ENCODE measurements at regions of chr20 and their contacts with region 1.

Region 1: GRCh38 chr20:34834459-34834893 is 9.0 kb upstream of the NCOA6 start:
- DNase-seq: no peak
- H3K4me3 Mint-ChIP-seq: no peak overlapping the region
- H3K27ac Mint-ChIP-seq: no peak overlapping the region
- H3K4me1 Mint-ChIP-seq: no peaks in the 10 kb centered on the region
- H3K27me3 Mint-ChIP-seq: peaks cover 7% of the 10 kb centered on the region

Region 2: DNA sequence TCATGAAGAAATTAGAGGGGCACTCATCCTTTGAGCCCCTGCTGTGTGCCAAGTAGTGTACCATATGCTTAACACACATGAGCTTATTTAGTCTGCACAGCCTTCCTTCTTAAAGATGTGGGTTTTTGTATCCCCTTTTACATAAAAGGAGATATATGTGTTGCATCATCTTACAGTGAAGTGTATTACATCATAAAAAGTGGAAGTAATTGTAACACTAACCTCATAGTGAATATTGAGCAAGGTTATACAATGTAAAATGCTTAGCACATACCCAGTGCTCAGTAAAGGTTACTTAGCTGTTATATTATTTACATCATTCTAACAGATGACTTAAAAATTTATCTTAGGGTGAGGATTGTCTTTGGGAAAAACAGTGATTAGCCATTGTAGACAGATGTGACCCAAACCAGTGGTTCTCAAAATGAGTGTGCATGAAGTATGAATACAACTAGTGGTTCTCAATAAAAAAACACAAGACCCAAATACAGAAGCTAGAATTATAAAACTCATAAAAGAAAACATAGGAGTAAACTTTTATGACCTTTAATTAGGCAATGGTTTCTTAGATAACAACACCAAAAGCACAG is 153.8 kb before region 1 on chr20:
- CTCF ChIA-PET with region 1: no interaction called
- intact Hi-C with region 1: no loop called
- DNase-seq: no peak
- H3K4me3 Mint-ChIP-seq: peak overlapping the region; percentile 4
- H3K27ac Mint-ChIP-seq: peak overlapping the region; percentile 46
- H3K4me1 Mint-ChIP-seq: peaks cover 19% of the 10 kb centered on the region
- H3K27me3 Mint-ChIP-seq: no peaks in the 10 kb centered on the region

Region 3: DNA sequence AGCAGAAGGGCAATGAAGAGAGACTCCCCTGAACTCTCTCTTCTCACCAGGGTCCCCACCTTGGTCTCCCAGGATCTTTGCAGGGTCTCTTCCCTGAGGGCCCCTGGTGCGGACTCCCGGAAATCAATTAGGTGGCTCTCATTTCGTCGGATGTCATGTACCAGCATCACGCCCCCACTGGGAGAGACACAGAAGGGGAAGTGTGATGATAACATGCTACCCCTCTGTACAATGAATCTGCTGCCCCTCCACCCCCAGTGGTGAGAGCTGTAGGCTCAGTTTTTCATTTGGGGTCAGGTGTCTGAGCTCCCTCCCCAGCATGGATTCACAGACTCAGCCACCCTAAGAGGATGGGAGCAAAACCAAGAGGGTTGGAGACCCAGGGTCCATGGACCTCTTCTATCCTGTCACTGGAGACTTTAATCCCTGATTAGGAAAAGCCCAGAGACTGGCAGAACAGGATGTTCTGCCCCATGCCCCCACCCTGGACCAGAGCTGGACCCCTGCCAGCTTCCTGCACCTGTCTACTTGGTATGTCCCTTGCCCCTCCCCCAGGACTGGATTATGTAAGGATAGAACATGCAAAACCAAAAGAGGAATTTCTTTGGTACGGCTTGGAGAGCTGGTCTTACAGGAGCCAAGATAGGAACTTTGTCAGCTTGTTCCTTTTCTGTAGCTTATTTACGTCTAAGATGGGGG is 27.1 kb after region 1 on chr20:
- CTCF ChIA-PET with region 1: no interaction called
- intact Hi-C with region 1: no loop called
- DNase-seq: no peak
- H3K4me3 Mint-ChIP-seq: no peak overlapping the region
- H3K27ac Mint-ChIP-seq: no peak overlapping the region
- H3K4me1 Mint-ChIP-seq: no peaks in the 10 kb centered on the region
- H3K27me3 Mint-ChIP-seq: no peaks in the 10 kb centered on the region

Region 4: DNA sequence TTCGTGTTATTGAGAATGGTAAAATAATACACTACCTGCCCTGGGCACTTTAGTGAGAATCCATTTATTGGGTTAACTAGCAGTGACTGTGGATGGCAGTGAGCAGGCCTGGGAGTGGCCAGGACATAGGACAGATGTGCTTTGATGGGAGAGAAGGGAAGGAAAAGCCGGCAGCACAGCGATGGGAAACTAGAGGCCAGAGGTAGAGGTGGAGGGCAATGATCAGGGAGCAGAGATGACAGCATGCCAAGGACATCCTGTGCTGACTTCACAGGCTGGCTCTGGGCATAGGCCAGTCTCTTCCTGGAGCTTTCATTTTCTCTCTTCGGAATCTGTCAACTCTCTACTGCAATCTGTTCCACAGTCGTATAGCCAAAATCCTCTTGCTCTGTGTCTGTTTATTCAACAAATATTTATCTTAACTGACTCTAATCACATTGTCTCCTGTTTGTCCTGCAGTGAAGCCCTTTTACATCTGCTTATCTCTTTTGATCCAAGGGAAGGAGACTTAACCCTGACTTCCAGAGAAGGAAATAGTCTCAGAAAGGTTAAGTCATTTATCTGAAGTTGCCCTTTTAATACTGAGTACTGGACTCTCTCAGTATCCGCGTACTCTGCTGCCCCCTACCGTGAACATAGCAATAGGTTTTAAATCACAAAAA is 373.6 kb after region 1 on chr20:
- CTCF ChIA-PET with region 1: interaction called, 3 read pairs
- intact Hi-C with region 1: loop called (anchors 2 kb)
- DNase-seq: peak; percentile 91
- H3K4me3 Mint-ChIP-seq: no peak overlapping the region
- H3K27ac Mint-ChIP-seq: no peak overlapping the region
- H3K4me1 Mint-ChIP-seq: no peaks in the 10 kb centered on the region
- H3K27me3 Mint-ChIP-seq: no peaks in the 10 kb centered on the region

Region 5: DNA sequence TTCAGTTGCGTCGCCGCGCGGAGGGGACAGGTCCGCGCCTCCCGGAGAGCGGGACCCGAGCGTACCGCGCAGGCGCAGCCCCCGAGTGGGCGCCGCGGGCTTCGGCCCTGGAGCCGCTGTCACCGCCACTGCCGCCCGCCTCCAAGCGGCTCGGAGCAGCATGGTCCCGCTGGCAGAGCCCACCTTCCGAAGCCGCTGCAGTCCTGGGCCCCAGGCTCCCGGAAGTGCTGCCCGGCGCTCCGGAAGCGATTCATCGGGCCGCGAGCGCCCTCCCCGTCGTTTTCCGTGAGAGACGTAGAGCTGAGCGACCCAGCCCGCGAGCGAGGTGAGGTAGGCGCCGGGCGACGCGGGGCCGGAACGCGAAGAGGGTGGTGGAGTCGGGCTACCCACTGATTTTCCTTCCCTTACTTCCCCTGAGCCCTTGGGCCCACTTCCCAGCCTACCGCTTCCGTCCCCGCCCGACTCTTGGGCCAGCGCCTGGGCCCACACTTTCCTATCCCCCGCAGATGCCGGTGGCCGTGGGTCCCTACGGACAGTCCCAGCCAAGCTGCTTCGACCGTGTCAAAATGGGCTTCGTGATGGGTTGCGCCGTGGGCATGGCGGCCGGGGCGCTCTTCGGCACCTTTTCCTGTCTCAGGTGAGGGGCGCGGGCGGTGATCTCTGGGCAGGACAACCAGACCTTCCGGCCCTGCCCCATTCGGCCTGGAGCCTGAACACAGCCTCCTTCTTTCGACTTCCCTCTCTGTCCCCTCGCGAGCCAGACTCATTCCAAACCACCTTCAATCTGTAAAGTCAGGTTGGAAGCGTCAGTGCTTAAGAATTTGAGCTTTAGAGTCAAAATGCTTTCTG is 864.9 kb after region 1 on chr20 and contains the starts of genes NFS1 and ROMO1:
- CTCF ChIA-PET with region 1: no interaction called
- intact Hi-C with region 1: no loop called
- DNase-seq: peak; percentile 89
- H3K4me3 Mint-ChIP-seq: peak within 1 kb of the TSS; percentile 93
- H3K27ac Mint-ChIP-seq: peak within 1 kb of the TSS; percentile 92
- H3K4me1 Mint-ChIP-seq: peaks cover 40% of the 10 kb centered on the region
- H3K27me3 Mint-ChIP-seq: no peaks in the 10 kb centered on the region
- total RNA-seq, gene NFS1: 33.6 to 38.1 TPM
- total RNA-seq, gene ROMO1: 120 to 134 TPM

Measured in activated naive CD4-positive, alpha-beta T cell treated with anti-CD3 and anti-CD28 coated beads for 36 hours (primary cell).